ENCODE measurements at regions of chr11 and their contacts with region 1.

Region 1: DNA sequence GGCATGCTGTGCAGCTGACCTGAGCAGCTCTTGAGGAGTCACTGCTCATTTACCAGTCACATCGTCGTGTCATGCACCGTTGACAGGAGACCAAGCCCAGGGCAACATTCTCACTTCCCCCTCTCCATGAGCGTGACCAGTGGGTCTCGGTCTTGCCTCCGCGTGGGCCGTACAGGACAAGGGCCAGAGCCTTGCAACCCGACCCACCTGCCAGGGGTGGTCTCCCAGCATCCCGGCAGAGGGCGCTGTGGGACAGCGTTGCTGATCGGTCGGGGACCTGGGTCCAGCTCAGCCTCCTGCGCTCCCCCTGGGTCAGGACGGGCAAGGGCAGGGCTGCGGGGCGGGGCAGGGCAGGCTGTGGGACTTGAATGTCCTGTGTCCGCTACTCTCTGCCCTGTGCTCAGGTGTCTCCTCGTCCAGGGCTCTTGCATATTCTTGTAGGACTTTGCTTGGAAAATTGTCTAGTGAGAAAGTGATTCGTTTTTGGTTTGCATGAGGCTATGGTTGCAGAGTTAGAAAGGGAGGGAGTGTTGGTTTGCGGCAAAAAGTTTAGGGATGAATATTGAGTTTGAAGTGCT is 16.2 kb downstream of the EIF4G2 start:
- DNase-seq: peak; percentile 75 to 90 (median 84)
- H3K4me3 ChIP-seq: no peak overlapping the region
- H3K27ac ChIP-seq: no peak overlapping the region
- H3K4me1 ChIP-seq: no peaks in the 10 kb centered on the region
- H3K27me3 ChIP-seq: no peaks in the 10 kb centered on the region
- CTCF ChIP-seq: peak; percentile 79 to 83 (median 82)
- EP300 ChIP-seq: no peak
- POLR2A ChIP-seq: no peak

Region 2: GRCh38 chr11:11022125-11022730 is 229.7 kb after region 1 on chr11:
- intact Hi-C with region 1: loop called (anchors 2 to 10 kb)
- DNase-seq: no peak
- H3K4me3 ChIP-seq: no peak overlapping the region
- H3K27ac ChIP-seq: no peak overlapping the region
- H3K4me1 ChIP-seq: no peaks in the 10 kb centered on the region
- H3K27me3 ChIP-seq: no peaks in the 10 kb centered on the region
- CTCF ChIP-seq: peak in 2 of 3 donors; percentile 23 to 62
- EP300 ChIP-seq: no peak
- POLR2A ChIP-seq: no peak

Region 3: GRCh38 chr11:11028017-11028692 is 235.7 kb after region 1 on chr11:
- intact Hi-C with region 1: loop called (anchors 2 to 10 kb)
- DNase-seq: peak; percentile 30 to 74 (median 52)
- H3K4me3 ChIP-seq: no peak overlapping the region
- H3K27ac ChIP-seq: no peak overlapping the region
- H3K4me1 ChIP-seq: no peaks in the 10 kb centered on the region
- H3K27me3 ChIP-seq: no peaks in the 10 kb centered on the region
- CTCF ChIP-seq: peak in 2 of 3 donors; percentile 29 to 34
- EP300 ChIP-seq: no peak
- POLR2A ChIP-seq: no peak

Region 4: DNA sequence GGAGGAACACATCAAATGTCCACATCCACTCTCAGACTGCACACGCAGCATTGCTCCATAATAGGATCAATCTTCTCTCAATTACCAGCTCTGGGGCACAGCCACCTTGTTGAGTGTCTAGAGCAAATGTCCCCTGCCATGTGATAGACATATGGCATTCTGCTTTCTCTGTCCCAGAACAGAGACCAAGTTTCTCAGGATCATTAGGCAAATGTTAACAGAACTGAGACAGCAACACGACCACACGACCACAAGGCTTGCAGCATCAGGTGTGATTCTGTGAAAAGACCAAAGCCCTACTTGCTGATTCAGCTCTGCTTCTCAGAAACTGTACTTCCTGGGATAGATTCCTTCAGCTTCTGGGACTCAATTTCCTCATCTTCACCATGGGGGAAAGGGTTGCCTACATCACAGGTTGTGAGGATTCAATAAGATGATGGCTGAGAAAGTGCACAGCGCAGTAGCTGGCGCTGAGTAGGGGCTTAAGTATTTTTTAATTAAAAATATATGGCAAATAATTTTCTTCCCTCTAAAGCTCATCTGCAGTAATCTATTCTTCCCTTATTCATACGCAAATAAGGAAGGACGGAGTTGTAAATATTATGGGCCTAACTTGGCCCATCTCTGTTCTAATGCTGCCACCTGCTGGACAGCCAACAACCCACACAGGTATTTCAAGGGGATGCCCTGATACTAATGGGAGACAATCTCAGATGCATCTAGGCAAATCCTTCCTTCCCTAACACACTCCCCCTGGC is 995.0 kb after region 1 on chr11:
- intact Hi-C with region 1: loop called in 2 of 4 experiments (anchors 2 to 10 kb)
- DNase-seq: peak; percentile 73 to 83 (median 82)
- H3K4me3 ChIP-seq: no peak overlapping the region
- H3K27ac ChIP-seq: no peak overlapping the region
- H3K4me1 ChIP-seq: no peaks in the 10 kb centered on the region
- H3K27me3 ChIP-seq: no peaks in the 10 kb centered on the region
- CTCF ChIP-seq: peak; percentile 52 to 91 (median 79)
- EP300 ChIP-seq: no peak
- POLR2A ChIP-seq: no peak